Activated B cell treated with CpG ODN at 0.5 μM for 24 hours (primary cell): ENCODE measurements at regions of chrX and their contacts with region 1.

Region 1: DNA sequence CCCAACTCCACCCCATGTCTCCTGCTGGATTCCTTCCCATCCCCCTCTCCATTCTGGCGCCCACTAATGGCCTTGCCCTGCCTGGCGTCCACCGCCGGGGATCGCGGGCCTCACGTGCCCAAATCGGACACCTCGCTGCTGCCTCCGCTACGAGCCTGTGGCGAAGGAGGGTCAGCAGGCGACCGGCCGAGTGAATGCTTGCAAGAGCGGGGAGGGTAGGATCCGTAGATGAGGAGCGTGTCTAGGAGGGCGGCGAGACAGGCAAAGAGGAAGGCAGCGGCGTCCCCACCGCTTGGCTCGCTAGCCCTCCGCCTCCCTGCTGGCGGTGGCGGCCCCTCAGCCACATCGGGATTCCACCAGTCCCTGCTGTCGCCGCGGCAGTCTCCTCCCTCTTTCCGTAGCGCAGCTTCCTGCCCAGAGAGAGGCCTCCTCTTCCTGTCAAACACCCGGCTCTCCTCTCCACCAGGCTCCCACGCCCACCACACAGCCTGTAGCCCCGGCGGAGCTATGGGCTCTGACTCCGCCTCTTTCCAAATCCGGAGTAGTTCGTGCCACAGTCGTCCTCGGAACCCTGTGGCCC is at the start of gene SPIN2B:
- DNase-seq: peak; percentile 59
- ATAC-seq: peak; percentile 98
- H3K4me3 Mint-ChIP-seq: peak within 1 kb of the TSS; percentile 92
- H3K27ac Mint-ChIP-seq: peak within 1 kb of the TSS; percentile 87
- H3K4me1 Mint-ChIP-seq: peaks cover 22% of the 10 kb centered on the region
- H3K27me3 Mint-ChIP-seq: no peaks in the 10 kb centered on the region
- CTCF ChIP-seq: no peak
- total RNA-seq, gene SPIN2B: 11.0 and 16.2 TPM in 2 replicates

Region 2: GRCh38 chrX:56986138-56986537 is 135.1 kb before region 1 on chrX:
- CTCF ChIA-PET with region 1: no interaction called
- POLR2A ChIA-PET with region 1: no interaction called
- intact Hi-C with region 1: loop called (anchors 5 kb)
- DNase-seq: no peak
- ATAC-seq: peak; percentile 75
- H3K4me3 Mint-ChIP-seq: no peak overlapping the region
- H3K27ac Mint-ChIP-seq: peak overlapping the region; percentile 76
- H3K4me1 Mint-ChIP-seq: peaks cover 35% of the 10 kb centered on the region
- H3K27me3 Mint-ChIP-seq: no peaks in the 10 kb centered on the region
- CTCF ChIP-seq: no peak

Region 3: GRCh38 chrX:56995271-56995994 is 125.8 kb before region 1 on chrX and contains the start of gene SPIN3:
- CTCF ChIA-PET with region 1: no interaction called
- POLR2A ChIA-PET with region 1: interaction called, 8 read pairs
- intact Hi-C with region 1: loop called (anchors 1 kb)
- DNase-seq: peak; percentile 22
- ATAC-seq: peak; percentile 88
- H3K4me3 Mint-ChIP-seq: peak within 1 kb of the TSS; percentile 91
- H3K27ac Mint-ChIP-seq: peak within 1 kb of the TSS; percentile 88
- H3K4me1 Mint-ChIP-seq: peaks cover 31% of the 10 kb centered on the region
- H3K27me3 Mint-ChIP-seq: no peaks in the 10 kb centered on the region
- CTCF ChIP-seq: no peak
- total RNA-seq, gene SPIN3: 17.5 and 19.2 TPM in 2 replicates